Keratinocyte (primary cell): ENCODE measurements at regions of chr9 and their contacts with region 1.

Region 1: DNA sequence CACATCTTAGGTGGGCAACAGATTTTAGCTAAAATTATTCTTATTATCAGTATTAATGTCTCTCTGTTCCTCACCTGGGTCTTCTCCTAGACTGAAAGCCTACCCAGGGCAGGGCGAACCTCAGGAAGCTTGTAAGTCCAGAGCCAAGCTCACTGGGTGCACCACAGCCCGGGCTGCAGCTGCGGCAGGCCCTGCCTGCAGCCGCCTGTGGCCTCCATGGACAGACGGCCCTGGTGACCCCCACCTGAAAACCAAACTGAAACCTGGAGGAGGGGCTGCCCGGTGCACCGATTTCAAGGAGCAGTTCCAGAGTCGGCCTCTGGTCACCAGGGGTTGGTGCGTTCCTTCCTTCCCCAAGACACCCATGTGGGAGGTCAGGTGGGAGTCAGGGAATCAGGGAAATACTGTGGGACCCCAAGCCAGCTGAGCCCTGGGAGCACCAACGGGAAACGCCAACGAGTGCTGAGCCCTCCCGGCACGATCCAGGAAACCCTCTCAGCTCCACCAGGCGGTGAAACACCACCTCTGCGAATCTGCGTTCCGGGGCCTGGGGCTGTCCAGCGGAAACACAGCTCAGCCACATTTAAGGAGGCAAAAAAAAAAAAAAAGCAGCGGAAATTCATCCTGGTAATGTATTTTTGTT is 68.6 kb upstream of the PPP1R26 start:
- DNase-seq: no peak
- H3K4me3 ChIP-seq: no peak overlapping the region
- H3K27ac ChIP-seq: no peak overlapping the region
- H3K4me1 ChIP-seq: peaks cover 13% of the 10 kb centered on the region
- H3K27me3 ChIP-seq: peaks cover 3% of the 10 kb centered on the region
- CTCF ChIP-seq: no peak

Region 2: GRCh38 chr9:135098400-135099105 is 312.4 kb before region 1 on chr9:
- dilution Hi-C with region 1: loop called (anchors 10 kb)
- DNase-seq: no peak
- H3K4me3 ChIP-seq: no peak overlapping the region
- H3K27ac ChIP-seq: no peak overlapping the region
- H3K4me1 ChIP-seq: no peaks in the 10 kb centered on the region
- H3K27me3 ChIP-seq: peaks cover 6% of the 10 kb centered on the region
- CTCF ChIP-seq: no peak